Gastrocnemius medialis (tissue), 4 donors: ENCODE measurements at regions of chr1 and their contacts with region 1.

Region 1: DNA sequence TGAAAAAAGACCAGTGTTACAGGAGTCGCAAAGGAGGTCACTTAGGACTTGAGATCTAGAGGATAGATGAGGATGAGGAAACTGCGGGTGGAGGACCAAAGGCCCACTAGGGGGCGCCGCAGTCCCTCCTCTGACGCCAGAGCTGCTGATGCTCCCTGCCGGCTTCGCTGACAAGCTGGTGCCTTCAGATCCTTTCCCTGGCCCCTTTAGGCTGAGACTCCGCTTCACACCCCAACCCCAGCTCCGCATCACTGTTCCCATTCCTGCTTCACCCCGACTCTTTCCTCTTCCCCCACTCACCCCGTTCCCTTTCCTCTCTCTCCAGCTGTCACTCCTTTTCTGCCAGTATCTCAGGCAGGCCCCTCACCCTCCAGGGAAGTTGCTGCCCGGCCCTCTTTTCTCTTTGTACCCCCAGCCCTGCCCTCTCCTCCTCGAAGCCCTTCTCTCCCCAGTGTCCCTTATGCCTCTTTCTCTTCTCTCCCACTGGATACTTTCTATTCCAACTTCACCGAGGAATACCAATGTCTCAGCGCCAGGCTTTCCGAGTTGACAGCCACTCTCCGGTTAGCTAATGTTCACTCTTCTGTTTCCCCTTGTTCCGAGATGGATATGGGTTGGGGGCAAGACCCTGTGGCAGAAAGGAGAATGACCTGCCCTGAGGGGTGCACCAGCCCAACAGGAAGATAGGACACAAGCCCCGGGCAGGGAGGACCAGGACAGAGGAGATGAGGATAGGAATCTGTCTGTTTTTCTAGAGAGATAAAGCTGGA is 4.5 kb downstream of the KCNJ9 start:
- DNase-seq: peak; percentile 53 to 79
- ATAC-seq: peak; percentile 69 to 89
- H3K4me3 ChIP-seq: no peak overlapping the region
- H3K27ac ChIP-seq: peak overlapping the region; percentile 14 to 51 (median 36)
- H3K4me1 ChIP-seq: peaks cover 0 to 6% of the 10 kb centered on the region in 2 donors
- H3K27me3 ChIP-seq: peaks cover 0 to 12% (median 3%) of the 10 kb centered on the region in 3 donors
- CTCF ChIP-seq: peak; percentile 75 to 89 (median 88)
- POLR2A ChIP-seq: no peak

Region 2: DNA sequence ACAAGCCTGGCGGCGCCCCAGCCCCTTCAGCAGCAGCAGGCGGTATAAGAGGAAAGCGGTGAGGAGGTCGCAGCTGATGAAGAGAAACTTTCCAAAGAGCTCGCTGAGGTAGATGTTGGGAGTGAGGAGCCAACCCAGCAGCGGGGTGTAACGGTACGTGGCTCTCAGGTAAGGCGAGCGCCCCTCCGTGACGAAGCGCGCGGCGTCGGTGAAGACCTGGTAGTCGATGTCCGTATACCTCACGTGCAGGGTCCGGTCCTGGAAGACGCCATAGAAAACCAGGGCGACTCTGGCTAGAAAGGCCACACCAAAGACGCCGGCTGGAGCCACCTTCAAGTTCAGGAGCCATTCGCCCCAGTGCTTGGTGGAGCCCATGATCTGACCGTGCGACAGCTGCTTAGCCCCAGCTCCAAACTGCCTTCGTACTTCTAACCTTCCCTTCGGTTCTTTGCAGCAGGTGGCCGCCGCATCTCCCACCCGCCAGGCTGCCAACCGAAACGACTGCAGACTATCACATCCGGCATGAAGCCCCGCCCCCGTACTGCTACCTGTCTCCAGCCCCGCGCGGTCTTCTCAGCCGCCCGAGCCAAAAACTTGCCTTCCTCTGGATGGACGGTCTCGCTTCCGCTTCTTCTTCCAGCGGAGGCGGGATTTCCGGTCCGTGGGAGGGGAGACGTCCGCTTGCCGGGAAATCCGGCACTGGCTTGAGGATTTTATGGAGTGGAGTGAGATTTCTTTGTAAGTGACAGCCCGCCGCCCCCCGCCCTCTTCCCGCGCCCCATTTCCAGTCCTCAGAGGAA is 54.3 kb before region 1 on chr1 and contains the start of gene PIGM:
- in situ Hi-C with region 1: loop called in 1 of 4 experiments (anchors 10 kb)
- intact Hi-C with region 1: no loop called
- DNase-seq: peak; percentile 90 to 94
- ATAC-seq: peak; percentile 97
- H3K4me3 ChIP-seq: peak within 1 kb of the TSS; percentile 80 to 94 (median 88)
- H3K27ac ChIP-seq: peak within 1 kb of the TSS; percentile 74 to 88 (median 81)
- H3K4me1 ChIP-seq: peaks cover 18 to 23% of the 10 kb centered on the region in 2 donors
- H3K27me3 ChIP-seq: no peaks in the 10 kb centered on the region
- CTCF ChIP-seq: no peak
- POLR2A ChIP-seq: peak in 1 of 2 donors; percentile 57
- total RNA-seq, gene PIGM: 0.55 to 0.75 (median 0.72) TPM

Region 3: DNA sequence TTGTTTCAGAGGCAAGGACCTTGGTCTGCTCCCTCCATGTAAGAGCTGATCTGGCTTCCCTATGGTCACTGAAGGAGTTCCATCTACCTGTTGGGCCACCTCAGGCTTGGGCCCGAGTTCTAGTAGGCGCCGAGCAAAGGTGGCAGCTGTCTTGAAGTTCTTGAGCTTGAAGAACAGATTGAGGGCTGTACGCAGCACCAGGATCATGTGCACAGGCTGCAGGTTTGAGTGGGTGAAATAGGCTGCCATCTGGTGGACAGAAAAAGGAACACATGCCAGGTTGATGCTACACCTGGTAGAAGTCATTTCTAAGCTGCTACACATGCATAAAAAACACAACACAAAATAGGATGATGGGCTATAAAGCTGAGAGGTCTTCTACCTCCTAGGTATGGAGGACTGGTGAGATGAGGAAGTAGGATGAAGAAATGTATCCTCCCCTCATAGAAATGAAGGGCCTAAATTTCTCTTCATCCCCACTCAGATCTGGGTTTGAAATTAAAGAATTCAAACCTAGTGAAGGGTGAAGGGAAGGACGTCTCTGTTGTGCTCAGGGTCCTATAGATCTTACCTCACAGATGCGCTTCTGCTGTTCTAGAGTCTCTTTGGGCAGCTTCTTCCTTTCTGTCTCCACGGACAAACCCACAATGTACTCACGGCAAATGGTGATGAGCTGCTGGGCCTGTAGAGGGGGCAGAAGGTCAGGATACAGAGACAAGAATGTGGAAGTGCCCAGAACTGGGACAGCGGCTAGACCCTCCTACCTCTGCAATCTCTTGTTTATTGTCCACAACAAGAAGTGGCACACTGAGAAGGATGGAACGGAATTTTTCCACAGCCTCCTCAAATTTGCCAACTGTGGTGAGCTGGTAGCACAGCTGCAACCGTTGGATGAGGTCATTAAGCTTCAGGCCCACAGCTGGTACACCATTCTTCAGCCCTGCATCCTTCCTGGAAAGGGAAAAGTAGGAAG is 205.7 kb after region 1 on chr1:
- in situ Hi-C with region 1: loop called in 1 of 4 experiments (anchors 25 kb)
- intact Hi-C with region 1: loop called (anchors 5 kb)
- DNase-seq: peak; percentile 51 to 79
- ATAC-seq: peak; percentile 89 to 92
- H3K4me3 ChIP-seq: no peak overlapping the region
- H3K27ac ChIP-seq: peak overlapping the region in 2 of 4 donors; percentile 34 to 61
- H3K4me1 ChIP-seq: no peaks in the 10 kb centered on the region
- H3K27me3 ChIP-seq: no peaks in the 10 kb centered on the region
- CTCF ChIP-seq: peak; percentile 74 to 85 (median 80)
- POLR2A ChIP-seq: no peak

Region 4: DNA sequence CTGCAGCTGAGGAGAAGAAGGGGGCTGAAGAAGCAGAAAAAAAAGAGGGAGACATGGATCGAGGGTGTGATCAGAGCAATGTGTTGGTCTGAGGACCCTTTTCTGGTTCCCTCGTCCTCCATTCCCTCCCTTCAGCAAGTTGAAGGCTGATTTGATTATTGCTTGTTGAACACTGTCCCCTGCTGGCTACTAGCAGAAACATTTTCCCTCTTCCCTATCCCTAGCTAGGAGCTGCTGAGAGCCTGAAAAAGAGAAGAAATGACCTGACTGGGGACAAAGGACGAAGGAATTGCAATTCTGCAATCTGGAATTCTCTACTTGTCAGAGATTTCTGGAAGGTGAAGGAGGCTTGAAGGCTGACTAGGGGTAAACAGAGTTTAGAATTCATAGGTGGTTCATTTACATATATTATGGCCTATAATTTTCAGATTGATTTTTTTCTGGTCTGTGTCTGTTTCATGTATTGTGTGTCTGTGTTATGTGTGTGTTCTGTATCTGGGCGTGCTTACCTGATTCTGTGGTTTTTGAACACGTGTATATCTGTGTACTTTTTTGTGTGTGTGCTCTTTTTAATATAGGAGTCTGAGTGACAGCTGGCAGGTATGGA is 290.8 kb after region 1 on chr1:
- in situ Hi-C with region 1: loop called in 2 of 4 experiments (anchors 25 kb)
- intact Hi-C with region 1: loop called (anchors 10 kb)
- DNase-seq: no peak
- ATAC-seq: peak; percentile 85 to 96
- H3K4me3 ChIP-seq: no peak overlapping the region
- H3K27ac ChIP-seq: no peak overlapping the region
- H3K4me1 ChIP-seq: peaks cover 0 to 9% of the 10 kb centered on the region in 2 donors
- H3K27me3 ChIP-seq: no peaks in the 10 kb centered on the region
- CTCF ChIP-seq: peak; percentile 83 to 96 (median 87)
- POLR2A ChIP-seq: no peak